Mammary epithelial cell (primary cell): ENCODE measurements at regions of chr7 and their contacts with region 1.

Region 1: DNA sequence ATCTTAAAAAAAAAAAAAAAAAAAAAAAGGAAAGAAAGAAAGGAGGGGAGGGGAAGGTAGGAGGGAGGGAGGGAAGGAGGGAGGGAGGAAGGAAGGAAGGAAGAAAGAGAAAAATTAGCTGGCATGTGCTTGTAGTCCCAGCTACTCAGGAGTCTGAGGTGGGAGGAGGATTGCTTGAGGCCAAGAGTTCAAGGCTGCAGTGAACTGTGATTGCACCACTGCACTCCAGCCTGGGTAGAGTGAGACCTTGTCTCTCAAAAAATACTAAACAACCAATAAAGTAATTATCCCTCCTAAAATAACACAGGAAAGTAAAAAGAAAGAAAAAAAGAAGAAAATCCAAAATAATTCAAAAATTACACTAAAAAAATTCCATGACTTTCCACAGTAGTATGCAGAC is 13.8 kb upstream of the NRF1 start:
- DNase-seq: no peak
- H3K4me3 ChIP-seq: no peak overlapping the region
- H3K27ac ChIP-seq: no peak overlapping the region
- H3K4me1 ChIP-seq: peaks cover 3% of the 10 kb centered on the region
- H3K27me3 ChIP-seq: no peaks in the 10 kb centered on the region
- CTCF ChIP-seq: no peak

Region 2: DNA sequence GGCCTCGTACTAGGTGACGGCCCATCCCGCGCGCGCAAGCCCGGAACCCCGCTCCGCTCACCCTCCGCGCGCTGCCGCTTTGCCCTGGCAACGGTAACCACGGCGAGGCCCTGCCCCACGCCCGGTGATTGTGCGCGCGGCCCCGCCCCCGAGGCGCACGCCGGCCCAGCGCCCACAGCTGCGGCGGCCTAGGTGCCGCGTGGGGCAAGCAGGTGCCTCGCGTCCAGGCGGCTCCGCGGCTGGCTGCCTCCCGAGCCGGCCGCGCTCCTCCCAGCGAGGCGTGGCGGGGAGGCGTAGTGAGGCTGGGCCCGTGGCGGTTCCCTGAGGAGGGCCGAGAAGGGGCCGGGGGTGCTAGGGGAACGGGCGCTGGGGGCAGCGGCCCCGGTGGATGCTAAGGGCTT is 95.3 kb before region 1 on chr7 and contains the start of gene SMKR1:
- CTCF ChIA-PET with region 1: no interaction called
- dilution Hi-C with region 1: no loop called
- in situ Hi-C with region 1: no loop called
- intact Hi-C with region 1: loop called (anchors 5 kb)
- DNase-seq: peak; percentile 60
- H3K4me3 ChIP-seq: peak within 1 kb of the TSS; percentile 52 to 61 (median 53)
- H3K27ac ChIP-seq: no peak within 1 kb of the TSS
- H3K4me1 ChIP-seq: peaks cover 7% of the 10 kb centered on the region
- H3K27me3 ChIP-seq: no peaks in the 10 kb centered on the region
- CTCF ChIP-seq: no peak
- total RNA-seq, gene SMKR1: 0.80 TPM in 1 of 2 donors, not detected in the other

Region 3: GRCh38 chr7:129530795-129531391 is 66.8 kb before region 1 on chr7:
- CTCF ChIA-PET with region 1: no interaction called
- dilution Hi-C with region 1: no loop called
- in situ Hi-C with region 1: no loop called
- intact Hi-C with region 1: loop called (anchors 5 kb)
- DNase-seq: peak; percentile 94
- H3K4me3 ChIP-seq: no peak overlapping the region
- H3K27ac ChIP-seq: peak overlapping the region; percentile 47
- H3K4me1 ChIP-seq: peaks cover 20% of the 10 kb centered on the region
- H3K27me3 ChIP-seq: no peaks in the 10 kb centered on the region
- CTCF ChIP-seq: no peak

Region 4: GRCh38 chr7:129578829-129579228 is 18.8 kb before region 1 on chr7:
- CTCF ChIA-PET with region 1: no interaction called
- dilution Hi-C with region 1: no loop called
- in situ Hi-C with region 1: no loop called
- intact Hi-C with region 1: no loop called
- DNase-seq: no peak
- H3K4me3 ChIP-seq: no peak overlapping the region
- H3K27ac ChIP-seq: no peak overlapping the region
- H3K4me1 ChIP-seq: no peaks in the 10 kb centered on the region
- H3K27me3 ChIP-seq: no peaks in the 10 kb centered on the region
- CTCF ChIP-seq: no peak